ENCODE measurements at regions of chr6 and their contacts with region 1.

Region 1: GRCh38 chr6:32692019-32692418 is 25.6 kb upstream of the HLA-DQB1 start:
- DNase-seq: peak in 2 of 5 donors; percentile 28 to 32
- ATAC-seq: no peak
- H3K4me3 ChIP-seq: no peak overlapping the region
- H3K27ac ChIP-seq: no peak overlapping the region
- H3K4me1 ChIP-seq: peaks cover 0 to 5% (median 0%) of the 10 kb centered on the region in 12 donors
- H3K27me3 ChIP-seq: peaks cover 0 to 11% (median 0%) of the 10 kb centered on the region in 9 donors
- CTCF ChIP-seq: peak in 8 of 12 donors; percentile 15 to 53 (median 34)
- POLR2A ChIP-seq: no peak

Region 2: DNA sequence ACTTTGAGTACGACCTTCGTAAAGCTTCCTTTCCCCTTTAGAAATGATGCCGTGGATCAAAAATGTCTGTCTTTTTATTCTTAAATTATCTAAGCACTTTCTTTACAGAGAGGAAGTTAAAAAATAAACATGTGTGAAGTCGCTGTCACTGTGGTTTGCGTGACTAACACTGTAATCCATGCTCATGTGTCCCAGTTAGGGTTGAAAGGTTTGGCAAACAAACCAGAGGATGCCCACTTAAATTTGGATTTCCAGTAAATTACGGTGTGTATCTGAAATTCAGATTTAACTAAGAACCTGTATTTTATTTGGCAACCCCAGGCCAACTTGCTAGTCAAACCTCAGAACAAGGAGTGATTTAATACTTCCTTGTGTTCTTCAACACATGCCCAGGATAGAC is 123.5 kb before region 1 on chr6:
- intact Hi-C with region 1: no loop called
- DNase-seq: no peak
- ATAC-seq: no peak
- H3K4me3 ChIP-seq: no peak overlapping the region
- H3K27ac ChIP-seq: no peak overlapping the region
- H3K4me1 ChIP-seq: no peaks in the 10 kb centered on the region
- H3K27me3 ChIP-seq: no peaks in the 10 kb centered on the region
- CTCF ChIP-seq: no peak
- POLR2A ChIP-seq: no peak

Region 3: DNA sequence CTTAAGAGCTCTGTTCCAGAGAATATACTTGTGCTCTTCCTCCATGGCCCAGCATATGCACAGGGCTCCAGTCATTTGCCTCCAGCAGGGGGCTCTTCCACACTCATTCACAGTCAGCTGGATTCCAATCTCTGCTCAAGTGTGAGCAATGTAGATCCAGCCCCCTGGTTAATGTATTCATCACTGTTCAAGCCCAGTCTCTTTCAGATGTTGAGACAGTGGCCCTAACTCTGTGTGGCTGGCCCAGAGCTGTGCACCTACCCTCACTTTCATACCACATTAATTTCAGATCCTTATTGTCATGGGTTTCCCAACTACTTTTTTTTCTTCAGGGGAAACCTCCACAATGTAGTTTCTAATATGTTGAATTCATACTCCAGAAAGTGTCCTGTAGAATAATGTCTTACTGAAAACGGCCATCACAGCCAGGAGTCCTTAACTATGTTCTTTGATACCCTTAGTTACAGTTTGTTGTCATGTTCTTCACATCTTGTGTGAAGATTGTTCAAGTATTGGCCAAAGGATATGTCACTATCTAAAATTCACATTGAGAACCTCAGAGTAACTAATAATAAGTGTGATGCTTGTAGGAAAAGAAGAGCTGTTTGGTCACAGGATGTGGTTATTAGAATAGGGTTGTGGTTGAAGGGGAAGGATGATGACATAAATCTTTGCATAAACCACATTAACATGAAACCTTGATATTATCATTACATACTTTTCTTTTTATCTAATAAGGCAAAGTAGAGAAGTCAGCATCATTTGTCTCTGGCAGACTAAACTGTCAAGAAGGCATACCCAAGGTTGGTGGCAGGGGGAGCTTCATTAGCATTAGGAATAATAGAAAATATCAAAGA is 69.2 kb before region 1 on chr6:
- intact Hi-C with region 1: loop called in 5 of 10 experiments (anchors 2 to 10 kb)
- DNase-seq: peak in 3 of 5 donors; percentile 26 to 58 (median 28)
- ATAC-seq: peak in 3 of 4 donors; percentile 67 to 87 (median 76)
- H3K4me3 ChIP-seq: no peak overlapping the region
- H3K27ac ChIP-seq: peak overlapping the region in 2 of 12 donors; percentile 41 to 72
- H3K4me1 ChIP-seq: peaks cover 0 to 14% (median 0%) of the 10 kb centered on the region in 12 donors
- H3K27me3 ChIP-seq: no peaks in the 10 kb centered on the region
- CTCF ChIP-seq: peak in 9 of 12 donors; percentile 29 to 63 (median 47)
- POLR2A ChIP-seq: no peak

Region 4: GRCh38 chr6:32627831-32628230 is 64.2 kb before region 1 on chr6:
- intact Hi-C with region 1: loop called in 5 of 10 experiments (anchors 2 to 10 kb)
- DNase-seq: peak in 3 of 5 donors; percentile 41 to 58 (median 48)
- ATAC-seq: peak in 2 of 4 donors; percentile 34 to 45
- H3K4me3 ChIP-seq: no peak overlapping the region
- H3K27ac ChIP-seq: peak overlapping the region in 4 of 12 donors; percentile 4 to 52 (median 46)
- H3K4me1 ChIP-seq: peaks cover 0 to 8% (median 0%) of the 10 kb centered on the region in 12 donors
- H3K27me3 ChIP-seq: no peaks in the 10 kb centered on the region
- CTCF ChIP-seq: no peak
- POLR2A ChIP-seq: no peak

Region 5: DNA sequence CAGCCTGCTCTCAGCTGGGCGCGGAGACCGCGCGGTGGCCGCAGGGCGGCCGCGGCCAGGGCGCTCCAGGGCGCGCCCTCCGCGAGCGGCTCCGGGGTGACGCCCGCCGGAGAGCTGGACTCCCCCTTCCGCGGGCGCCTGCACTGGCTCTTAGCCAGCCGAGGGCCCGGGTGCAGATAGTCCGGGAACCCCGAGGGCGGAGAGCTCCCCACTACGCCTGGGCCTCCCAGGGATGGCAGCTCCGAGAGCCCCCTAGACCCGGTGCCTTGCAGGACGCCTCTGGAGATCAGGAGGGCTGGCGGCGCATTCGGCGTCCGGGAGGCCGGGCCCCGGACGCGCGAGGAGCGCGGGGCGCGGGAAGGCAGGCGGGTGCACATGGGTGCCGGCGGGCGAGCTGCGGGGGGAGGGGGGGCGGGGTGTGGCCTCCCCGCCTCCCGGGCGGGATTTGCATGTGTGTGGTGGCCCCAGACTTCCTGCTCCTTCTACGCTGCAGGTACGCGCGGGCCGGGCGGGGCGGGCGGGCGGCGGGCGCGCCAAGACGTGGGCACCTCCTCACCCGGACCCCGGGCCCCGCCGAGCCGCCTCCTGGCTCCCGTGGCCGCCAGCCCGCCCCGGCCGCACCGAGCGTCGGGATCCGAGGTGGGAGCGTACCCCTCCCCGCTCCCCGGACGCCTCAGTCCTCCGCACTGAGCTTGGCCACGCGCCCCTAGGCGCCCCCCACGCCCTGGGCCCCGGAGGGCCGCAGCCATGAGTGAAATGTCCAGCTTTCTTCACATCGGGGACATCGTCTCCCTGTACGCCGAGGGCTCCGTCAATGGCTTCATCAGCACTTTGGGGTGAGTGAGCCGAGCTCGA is 929.1 kb after region 1 on chr6 and contains the start of gene ITPR3:
- intact Hi-C with region 1: no loop called
- DNase-seq: peak; percentile 49 to 77 (median 57)
- ATAC-seq: peak; percentile 16 to 66 (median 52)
- H3K4me3 ChIP-seq: peak within 1 kb of the TSS; percentile 47 to 86 (median 68)
- H3K27ac ChIP-seq: peak within 1 kb of the TSS; percentile 76 to 97 (median 90)
- H3K4me1 ChIP-seq: peaks cover 0 to 47% (median 17%) of the 10 kb centered on the region in 12 donors
- H3K27me3 ChIP-seq: peaks cover 0 to 8% (median 4%) of the 10 kb centered on the region in 9 donors
- CTCF ChIP-seq: no peak
- POLR2A ChIP-seq: peak in 1 of 2 donors; percentile 26
- total RNA-seq, gene ITPR3: 4.8 to 33.5 (median 7.8) TPM

Measured in heart left ventricle (tissue), 16 donors.